ENCODE measurements at regions of chr19 and their contacts with region 1.

Region 1: DNA sequence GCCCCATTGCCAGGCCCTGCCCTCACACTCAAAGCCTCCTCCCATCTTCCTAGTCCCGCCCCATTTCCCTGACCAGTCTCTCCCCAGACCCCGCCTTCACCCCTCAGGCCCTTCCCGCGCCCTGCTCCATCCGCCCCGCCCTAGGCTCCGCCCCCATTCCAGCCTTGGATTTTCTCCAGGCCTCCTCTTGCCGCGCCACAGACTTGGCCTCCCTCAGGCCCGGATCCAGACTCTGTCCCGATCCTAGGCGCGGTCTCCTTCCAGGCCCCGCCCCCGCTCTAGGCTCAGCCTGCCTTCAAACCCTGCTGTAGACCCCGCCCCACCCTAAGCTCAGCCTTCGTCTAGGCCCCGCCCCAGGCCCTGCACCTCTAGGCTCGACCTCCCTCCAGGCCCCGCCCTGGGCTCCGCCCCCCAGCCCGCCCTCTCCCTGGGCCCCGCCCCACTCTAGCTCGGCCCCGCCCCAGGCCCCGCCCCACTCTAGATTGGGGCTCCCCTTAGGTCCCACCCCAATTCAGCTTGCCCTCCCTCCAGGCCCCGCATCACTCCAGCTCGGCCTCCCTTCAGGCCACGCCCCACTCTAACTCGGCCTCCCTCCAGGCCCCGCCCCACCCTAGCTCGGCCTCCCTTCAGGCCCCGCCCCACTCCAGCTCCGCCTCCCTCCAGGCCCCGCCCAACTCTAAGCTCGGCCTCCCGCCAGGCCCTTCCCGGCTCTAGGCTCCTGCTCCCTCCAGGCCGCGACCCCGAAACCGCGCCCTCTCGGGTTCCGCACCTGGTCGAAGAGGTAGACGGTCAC is 18.5 kb downstream of the LMTK3 start:
- DNase-seq: peak; percentile 69 to 87 (median 78)
- ATAC-seq: peak; percentile 87
- H3K4me3 ChIP-seq: peak overlapping the region; percentile 41
- H3K4me3 Mint-ChIP-seq: peak overlapping the region; percentile 58 to 84 (median 72)
- H3K27ac ChIP-seq: no peak overlapping the region
- H3K27ac Mint-ChIP-seq: peak overlapping the region; percentile 20 to 86 (median 67)
- H3K4me1 ChIP-seq: peaks cover 4 to 25% of the 10 kb centered on the region in 2 donors
- H3K4me1 Mint-ChIP-seq: peaks cover 17 to 51% (median 43%) of the 10 kb centered on the region in 7 donors
- H3K27me3 ChIP-seq: no peaks in the 10 kb centered on the region
- H3K27me3 Mint-ChIP-seq: peaks cover 0 to 57% (median 6%) of the 10 kb centered on the region in 5 donors

Region 2: DNA sequence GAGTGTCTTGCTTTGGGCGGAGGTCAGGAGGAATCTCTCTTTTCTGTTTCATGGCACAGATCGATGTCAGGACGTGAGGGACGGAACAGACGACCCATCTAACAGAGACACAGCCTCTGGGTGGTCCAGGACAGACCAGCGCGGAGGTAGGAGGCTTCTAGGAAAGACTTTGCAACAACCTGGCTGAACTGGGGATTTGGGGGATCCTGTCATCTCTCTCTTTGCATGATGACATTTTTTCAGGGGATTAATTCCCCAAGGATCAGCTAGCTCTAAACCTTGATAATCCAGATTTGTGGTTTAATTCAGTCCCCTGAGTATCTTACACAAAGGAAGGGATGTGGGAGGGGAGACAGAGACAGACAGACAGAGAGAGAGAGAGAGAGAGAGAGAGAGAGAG is 463.7 kb before region 1 on chr19:
- CTCF ChIA-PET with region 1: no interaction called
- POLR2A ChIA-PET with region 1: no interaction called
- intact Hi-C with region 1: no loop called
- DNase-seq: no peak
- ATAC-seq: no peak
- H3K4me3 ChIP-seq: no peak overlapping the region
- H3K4me3 Mint-ChIP-seq: no peak overlapping the region
- H3K27ac ChIP-seq: no peak overlapping the region
- H3K27ac Mint-ChIP-seq: no peak overlapping the region
- H3K4me1 ChIP-seq: no peaks in the 10 kb centered on the region
- H3K4me1 Mint-ChIP-seq: peaks cover 0 to 6% (median 0%) of the 10 kb centered on the region in 7 donors
- H3K27me3 ChIP-seq: no peaks in the 10 kb centered on the region
- H3K27me3 Mint-ChIP-seq: peaks cover 21 to 59% (median 45%) of the 10 kb centered on the region in 5 donors

Region 3: GRCh38 chr19:48149430-48149829 is 343.7 kb before region 1 on chr19:
- CTCF ChIA-PET with region 1: no interaction called
- POLR2A ChIA-PET with region 1: no interaction called
- intact Hi-C with region 1: no loop called
- DNase-seq: no peak
- ATAC-seq: no peak
- H3K4me3 ChIP-seq: no peak overlapping the region
- H3K4me3 Mint-ChIP-seq: no peak overlapping the region
- H3K27ac ChIP-seq: no peak overlapping the region
- H3K27ac Mint-ChIP-seq: peak overlapping the region in 1 of 9 donors; percentile 33
- H3K4me1 ChIP-seq: no peaks in the 10 kb centered on the region
- H3K4me1 Mint-ChIP-seq: peaks cover 0 to 4% (median 0%) of the 10 kb centered on the region in 7 donors
- H3K27me3 ChIP-seq: no peaks in the 10 kb centered on the region
- H3K27me3 Mint-ChIP-seq: no peaks in the 10 kb centered on the region

Region 4: DNA sequence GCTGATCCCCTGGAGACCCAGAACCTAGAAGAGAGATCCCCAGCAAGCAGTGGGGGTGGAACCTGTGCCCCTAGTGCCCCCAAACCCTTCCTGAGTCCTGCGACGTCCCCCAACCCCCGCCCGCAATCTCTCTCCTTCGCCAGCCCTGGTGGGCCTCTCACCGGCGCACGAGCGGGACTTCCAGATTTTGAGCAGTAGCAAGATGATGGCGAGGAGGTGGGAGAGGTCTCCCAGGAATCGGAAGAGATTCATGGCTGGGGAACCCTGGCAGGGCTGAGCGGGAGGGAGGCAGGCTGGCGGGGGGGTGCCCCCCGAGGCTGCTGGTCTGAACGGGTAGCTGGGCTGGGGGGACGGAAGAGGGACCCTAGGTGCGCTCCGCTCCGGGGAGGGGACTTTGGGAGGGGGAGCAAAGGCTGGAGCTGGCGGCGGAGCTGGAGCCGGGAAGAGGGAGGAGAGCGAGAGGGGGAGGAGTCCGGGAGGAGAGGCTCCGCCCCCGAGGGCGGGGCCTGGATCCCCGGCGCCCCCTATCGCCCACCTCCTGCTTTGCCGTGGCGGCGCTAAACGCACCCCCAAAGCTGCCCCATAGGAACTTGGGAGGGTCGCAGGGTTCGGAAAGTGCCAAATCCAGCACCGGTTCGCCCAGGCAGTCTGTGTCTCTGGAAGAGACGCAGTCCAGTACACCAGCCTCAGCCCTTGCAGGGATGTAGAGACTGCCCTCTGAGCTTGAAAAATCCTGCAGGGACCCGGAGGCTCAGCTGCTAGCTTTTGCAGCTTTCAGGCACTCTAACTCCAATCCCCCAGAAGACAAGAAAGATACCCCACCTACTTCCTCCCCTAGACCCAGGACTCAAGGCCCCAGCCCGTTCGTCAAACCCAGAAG is 101.8 kb before region 1 on chr19 and contains the start of gene KDELR1:
- CTCF ChIA-PET with region 1: interaction called, 6 read pairs
- POLR2A ChIA-PET with region 1: no interaction called
- intact Hi-C with region 1: loop called (anchors 2 to 5 kb)
- DNase-seq: peak; percentile 55 to 89 (median 72)
- ATAC-seq: peak; percentile 92
- H3K4me3 ChIP-seq: peak within 1 kb of the TSS; percentile 96
- H3K4me3 Mint-ChIP-seq: peak within 1 kb of the TSS; percentile 84 to 95 (median 92)
- H3K27ac ChIP-seq: peak within 1 kb of the TSS; percentile 92
- H3K27ac Mint-ChIP-seq: peak within 1 kb of the TSS; percentile 78 to 97 (median 93)
- H3K4me1 ChIP-seq: peaks cover 15 to 32% of the 10 kb centered on the region in 2 donors
- H3K4me1 Mint-ChIP-seq: peaks cover 5 to 46% (median 36%) of the 10 kb centered on the region in 7 donors
- H3K27me3 ChIP-seq: peaks cover 9 to 21% of the 10 kb centered on the region in 2 donors
- H3K27me3 Mint-ChIP-seq: peaks cover 9 to 42% (median 21%) of the 10 kb centered on the region in 5 donors
- total RNA-seq, gene KDELR1: 42.7 to 73.9 (median 52.3) TPM

Region 5: GRCh38 chr19:48419158-48419920 is 73.8 kb before region 1 on chr19:
- CTCF ChIA-PET with region 1: no interaction called
- POLR2A ChIA-PET with region 1: no interaction called
- intact Hi-C with region 1: loop called in 1 of 2 experiments (anchors 2 kb)
- DNase-seq: peak; percentile 44 to 77 (median 64)
- ATAC-seq: peak; percentile 79
- H3K4me3 ChIP-seq: peak overlapping the region; percentile 15
- H3K4me3 Mint-ChIP-seq: peak overlapping the region; percentile 60 to 90 (median 80)
- H3K27ac ChIP-seq: no peak overlapping the region
- H3K27ac Mint-ChIP-seq: peak overlapping the region in 6 of 9 donors; percentile 6 to 93 (median 74)
- H3K4me1 ChIP-seq: peaks cover 0 to 5% of the 10 kb centered on the region in 2 donors
- H3K4me1 Mint-ChIP-seq: peaks cover 12 to 30% (median 22%) of the 10 kb centered on the region in 7 donors
- H3K27me3 ChIP-seq: no peaks in the 10 kb centered on the region
- H3K27me3 Mint-ChIP-seq: peaks cover 0 to 22% (median 5%) of the 10 kb centered on the region in 5 donors

Region 6: DNA sequence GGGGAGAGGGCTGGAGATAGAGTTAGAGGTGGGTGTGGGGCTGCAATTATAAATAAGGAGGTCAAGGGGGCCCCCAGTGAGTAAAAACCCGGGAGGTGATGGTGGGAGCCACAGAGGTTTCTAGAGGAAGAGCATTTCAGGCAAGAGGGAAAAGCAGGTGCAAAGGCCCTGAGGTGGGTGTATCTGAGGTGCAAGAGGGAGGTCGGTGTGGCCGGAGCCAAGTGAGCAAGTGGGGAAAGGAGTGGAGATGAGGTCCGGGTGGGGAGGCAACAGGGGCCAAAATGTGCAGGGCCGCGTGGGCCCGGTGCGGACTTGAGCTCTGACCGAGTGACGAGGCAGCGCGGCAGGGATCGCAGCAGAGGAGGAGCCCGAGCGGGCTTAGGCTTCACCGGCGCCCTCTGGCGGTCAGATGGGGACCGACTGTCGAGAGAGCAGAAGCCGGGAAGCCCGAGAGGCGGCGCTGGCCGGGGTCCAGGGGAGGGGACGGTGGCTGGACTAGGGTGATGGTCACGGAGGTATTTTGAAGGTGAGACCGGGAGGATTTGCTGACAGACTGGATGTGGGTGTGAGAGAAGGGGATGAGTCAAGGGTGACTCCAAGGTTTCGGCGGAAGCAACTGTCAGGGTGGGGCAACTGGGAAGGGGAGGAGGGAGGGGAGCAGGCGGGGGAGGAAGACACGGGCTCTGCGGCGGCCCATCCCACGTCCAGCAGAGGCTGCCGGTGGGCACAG is 95.7 kb after region 1 on chr19:
- CTCF ChIA-PET with region 1: interaction called, 37 read pairs
- POLR2A ChIA-PET with region 1: interaction called, 5 read pairs
- intact Hi-C with region 1: loop called (anchors 1 kb)
- DNase-seq: peak; percentile 65 to 92 (median 81)
- ATAC-seq: peak; percentile 92
- H3K4me3 ChIP-seq: no peak overlapping the region
- H3K4me3 Mint-ChIP-seq: peak overlapping the region; percentile 51 to 93 (median 78)
- H3K27ac ChIP-seq: no peak overlapping the region
- H3K27ac Mint-ChIP-seq: peak overlapping the region in 6 of 9 donors; percentile 37 to 86 (median 78)
- H3K4me1 ChIP-seq: peaks cover 0 to 3% of the 10 kb centered on the region in 2 donors
- H3K4me1 Mint-ChIP-seq: peaks cover 11 to 27% (median 15%) of the 10 kb centered on the region in 7 donors
- H3K27me3 ChIP-seq: no peaks in the 10 kb centered on the region
- H3K27me3 Mint-ChIP-seq: peaks cover 0 to 5% (median 0%) of the 10 kb centered on the region in 5 donors

Region 7: DNA sequence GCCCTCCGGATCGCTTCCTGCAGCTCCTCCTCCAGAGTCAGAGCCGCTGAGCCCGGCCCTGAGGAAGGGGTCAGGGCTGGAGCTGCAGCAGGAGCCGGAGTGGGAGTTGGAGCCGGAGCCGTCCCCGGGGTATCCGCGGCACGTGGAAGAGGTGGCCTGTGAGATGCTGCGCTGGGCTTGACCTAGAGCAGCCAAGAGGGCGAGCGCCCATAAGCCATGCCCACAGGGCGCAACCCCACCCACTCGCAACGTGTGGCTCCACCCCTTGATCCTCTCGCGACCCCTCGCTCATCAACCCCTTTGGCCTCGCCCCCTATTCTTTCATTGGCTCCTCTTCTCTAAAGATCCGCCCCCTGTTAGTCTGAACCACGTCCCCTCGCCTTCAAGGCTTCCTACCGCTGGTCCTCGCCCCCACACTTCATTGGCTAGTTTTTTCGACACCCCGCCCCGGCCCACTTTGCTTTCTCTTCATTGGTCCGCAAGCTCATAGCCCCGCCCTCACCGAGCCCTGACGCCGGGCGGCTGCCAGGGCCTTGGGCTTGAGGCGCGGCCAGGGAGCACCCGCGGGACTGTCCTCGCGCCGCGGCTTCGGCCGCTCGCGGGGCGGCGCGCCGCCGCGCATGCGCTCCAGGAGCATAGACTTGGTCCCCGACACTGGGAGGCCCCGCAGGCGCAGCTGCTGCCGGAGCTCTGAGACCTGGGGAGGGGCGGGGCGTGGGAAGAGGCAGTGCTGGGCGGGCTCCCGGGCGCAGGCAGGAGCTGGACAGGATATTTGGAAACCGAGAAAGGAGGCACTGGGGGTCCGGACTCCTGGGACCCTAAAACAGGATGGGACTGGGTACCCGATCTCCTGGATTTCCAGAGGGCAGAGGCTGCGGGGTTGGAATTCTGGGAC is 221.0 kb after region 1 on chr19:
- CTCF ChIA-PET with region 1: no interaction called
- POLR2A ChIA-PET with region 1: no interaction called
- intact Hi-C with region 1: loop called in 1 of 2 experiments (anchors 2 kb)
- DNase-seq: peak; percentile 92 to 97 (median 97)
- ATAC-seq: peak; percentile 96
- H3K4me3 ChIP-seq: peak overlapping the region; percentile 95
- H3K4me3 Mint-ChIP-seq: peak overlapping the region; percentile 82 to 92 (median 88)
- H3K27ac ChIP-seq: peak overlapping the region; percentile 79
- H3K27ac Mint-ChIP-seq: peak overlapping the region; percentile 16 to 90 (median 81)
- H3K4me1 ChIP-seq: peaks cover 11 to 12% of the 10 kb centered on the region in 2 donors
- H3K4me1 Mint-ChIP-seq: peaks cover 9 to 24% (median 20%) of the 10 kb centered on the region in 7 donors
- H3K27me3 ChIP-seq: no peaks in the 10 kb centered on the region
- H3K27me3 Mint-ChIP-seq: no peaks in the 10 kb centered on the region

Measured in naive thymus-derived CD4-positive, alpha-beta T cell (primary cell).